ENCODE measurements at regions of chr3 and their contacts with region 1.

Region 1: GRCh38 chr3:66037330-66037982 is 1.3 kb downstream of the MAGI1 start:
- DNase-seq: peak; percentile 65
- ATAC-seq: peak; percentile 56
- H3K4me3 Mint-ChIP-seq: peak overlapping the region; percentile 98
- H3K27ac Mint-ChIP-seq: peak overlapping the region; percentile 66
- H3K4me1 Mint-ChIP-seq: peaks cover 58% of the 10 kb centered on the region
- H3K27me3 Mint-ChIP-seq: no peaks in the 10 kb centered on the region; the same call in 1 of the 2 replicates
- CTCF ChIP-seq: no peak

Region 2: DNA sequence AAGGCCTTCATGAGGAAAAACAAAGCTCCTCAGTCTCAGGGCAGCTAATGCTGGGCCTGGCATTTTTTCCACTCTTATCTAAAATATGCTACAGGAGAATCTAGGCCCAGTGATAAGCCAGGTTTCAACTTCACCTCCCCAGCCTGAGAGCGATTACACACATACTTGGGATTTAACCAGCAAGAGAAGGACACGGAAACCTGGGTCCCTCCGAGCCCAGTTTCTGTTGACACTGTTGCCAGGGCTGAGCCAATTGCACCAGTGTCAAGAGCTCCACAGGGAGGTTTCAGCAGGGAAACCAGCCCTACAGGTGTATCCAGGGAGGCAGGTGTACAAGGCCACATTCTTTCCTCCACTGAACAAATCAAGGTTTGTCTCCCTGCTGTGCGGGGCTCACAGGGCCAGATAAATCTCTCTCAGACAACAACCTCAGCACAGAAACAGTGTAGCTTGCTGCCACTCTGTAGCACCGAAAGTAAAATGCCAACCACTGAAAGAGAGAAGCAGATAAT is 84.1 kb before region 1 on chr3:
- CTCF ChIA-PET with region 1: interaction called, 3 read pairs
- POLR2A ChIA-PET with region 1: interaction called, 18 read pairs
- DNase-seq: peak; percentile 88
- ATAC-seq: peak; percentile 86
- H3K4me3 Mint-ChIP-seq: peak overlapping the region; percentile 17
- H3K27ac Mint-ChIP-seq: peak overlapping the region; percentile 99
- H3K4me1 Mint-ChIP-seq: peaks cover 75% of the 10 kb centered on the region
- H3K27me3 Mint-ChIP-seq: peaks cover 8% of the 10 kb centered on the region
- CTCF ChIP-seq: no peak

Region 3: GRCh38 chr3:66138336-66139313 is 101.2 kb after region 1 on chr3:
- CTCF ChIA-PET with region 1: interaction called, 12 read pairs
- POLR2A ChIA-PET with region 1: interaction called, 5 read pairs
- DNase-seq: peak; percentile 68
- ATAC-seq: peak; percentile 97
- H3K4me3 Mint-ChIP-seq: no peak overlapping the region
- H3K27ac Mint-ChIP-seq: no peak overlapping the region
- H3K4me1 Mint-ChIP-seq: peaks cover 24% of the 10 kb centered on the region
- H3K27me3 Mint-ChIP-seq: peaks cover 3% of the 10 kb centered on the region; the same call in 1 of the 2 replicates
- CTCF ChIP-seq: peak; percentile 55